Activated CD4-positive, alpha-beta memory T cell treated with anti-CD3 and anti-CD28 coated beads, Interleukin-2, amount 10 ng/mL, durations not matched to agents 7 days and 5 days (primary cell): ENCODE measurements at regions of chr7 and their contacts with region 1.

Region 1: GRCh38 chr7:151123822-151124464 is 37.7 kb downstream of the AGAP3 start:
- DNase-seq: peak; percentile 84
- H3K4me3 Mint-ChIP-seq: no peak overlapping the region
- H3K27ac Mint-ChIP-seq: no peak overlapping the region
- H3K4me1 Mint-ChIP-seq: peaks cover 3% of the 10 kb centered on the region
- H3K27me3 Mint-ChIP-seq: no peaks in the 10 kb centered on the region

Region 2: DNA sequence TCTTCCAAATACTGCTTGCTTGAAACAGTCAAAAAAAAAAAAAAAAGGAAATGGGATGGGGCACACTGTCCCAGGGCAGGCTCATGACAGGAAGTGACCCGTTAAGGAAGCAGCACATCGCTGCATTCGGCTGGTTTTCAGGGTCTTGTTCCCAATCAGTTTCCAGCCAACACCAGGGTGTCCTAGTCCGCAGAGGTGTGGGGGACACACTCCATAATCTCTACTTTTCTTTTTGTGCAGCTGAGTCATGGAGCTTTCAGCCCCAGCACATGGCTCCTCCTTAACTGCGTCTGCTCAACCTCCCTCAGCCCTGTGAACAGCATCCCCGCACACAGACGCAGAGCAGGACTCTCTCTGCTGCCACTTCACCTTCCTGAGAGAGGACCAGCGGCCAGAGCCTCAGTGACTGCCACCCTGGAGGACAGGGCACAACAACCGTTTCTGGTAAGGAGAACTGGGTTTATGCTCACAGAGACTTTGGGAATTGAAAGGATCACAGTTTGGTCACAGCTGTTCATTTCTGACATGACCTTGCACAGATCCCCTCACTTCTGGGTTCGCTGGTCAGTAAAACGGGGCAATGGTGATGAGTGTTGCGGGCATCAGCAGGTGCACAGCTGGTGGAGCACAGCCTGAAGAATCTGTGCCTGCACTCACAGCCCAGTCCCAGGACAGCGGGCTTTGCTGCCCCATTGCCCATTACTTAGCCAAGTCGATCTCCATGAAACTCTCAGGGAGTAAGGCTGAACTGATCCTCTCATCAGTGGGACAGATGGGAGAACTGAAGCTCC is 386.5 kb before region 1 on chr7 and contains the start of gene GIMAP5:
- CTCF ChIA-PET with region 1: no interaction called
- POLR2A ChIA-PET with region 1: no interaction called
- DNase-seq: peak; percentile 65
- H3K4me3 Mint-ChIP-seq: peak within 1 kb of the TSS; percentile 99
- H3K27ac Mint-ChIP-seq: peak within 1 kb of the TSS; percentile 94
- H3K4me1 Mint-ChIP-seq: peaks cover 80% of the 10 kb centered on the region
- H3K27me3 Mint-ChIP-seq: no peaks in the 10 kb centered on the region
- total RNA-seq, gene GIMAP5: 83.9 to 84.3 TPM

Region 3: GRCh38 chr7:151167197-151167961 is 43.4 kb after region 1 on chr7 and contains the start of gene GBX1:
- CTCF ChIA-PET with region 1: interaction called, 12 read pairs
- POLR2A ChIA-PET with region 1: no interaction called
- DNase-seq: no peak
- H3K4me3 Mint-ChIP-seq: peak within 1 kb of the TSS; percentile 53
- H3K27ac Mint-ChIP-seq: no peak within 1 kb of the TSS
- H3K4me1 Mint-ChIP-seq: peaks cover 7% of the 10 kb centered on the region
- H3K27me3 Mint-ChIP-seq: peaks cover 36% of the 10 kb centered on the region
- total RNA-seq, gene GBX1: not detected

Region 4: DNA sequence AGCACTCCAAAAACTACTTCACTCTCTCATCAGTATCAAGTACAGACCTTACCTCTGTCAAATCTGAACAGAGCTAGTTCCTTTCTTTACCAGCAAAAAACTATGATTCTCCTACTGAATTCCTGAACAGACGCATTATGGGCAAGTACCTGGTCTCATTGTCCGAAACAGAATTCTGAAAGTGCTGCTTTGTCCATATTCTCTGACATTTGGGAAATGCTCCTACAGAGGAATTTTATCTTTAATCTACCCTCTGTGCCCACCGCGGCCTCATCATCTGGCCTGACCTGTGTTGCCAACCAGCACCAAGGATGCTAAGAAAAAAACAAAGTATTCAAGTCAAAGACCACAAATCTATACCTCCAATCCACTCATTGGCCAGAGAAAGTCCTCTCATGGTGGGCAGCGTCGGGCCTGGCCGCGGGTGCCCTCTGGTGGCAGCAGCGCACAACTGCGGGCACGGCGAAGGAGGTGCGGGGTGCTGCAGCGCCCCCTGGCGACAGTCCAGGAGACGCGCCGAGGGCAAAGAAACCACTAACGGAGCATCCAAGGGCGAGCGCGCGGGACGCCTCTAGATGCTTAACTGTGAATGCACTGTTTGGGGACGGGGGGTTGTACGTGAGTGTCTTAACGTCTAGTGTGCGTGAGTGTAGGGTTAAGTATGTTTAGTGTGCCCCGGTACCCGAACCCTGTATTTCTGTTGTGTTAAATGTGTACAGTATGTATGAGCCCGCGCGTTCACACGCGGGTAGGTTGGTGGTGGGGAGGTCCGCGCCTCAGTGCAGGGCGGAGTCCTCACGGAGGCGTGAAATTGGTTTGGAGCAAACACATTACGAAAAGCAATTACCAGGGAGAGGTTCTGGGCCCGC is 48.6 kb after region 1 on chr7:
- CTCF ChIA-PET with region 1: interaction called, 10 read pairs
- POLR2A ChIA-PET with region 1: no interaction called
- DNase-seq: peak; percentile 83
- H3K4me3 Mint-ChIP-seq: no peak overlapping the region
- H3K27ac Mint-ChIP-seq: no peak overlapping the region
- H3K4me1 Mint-ChIP-seq: peaks cover 7% of the 10 kb centered on the region
- H3K27me3 Mint-ChIP-seq: peaks cover 52% of the 10 kb centered on the region

Region 5: DNA sequence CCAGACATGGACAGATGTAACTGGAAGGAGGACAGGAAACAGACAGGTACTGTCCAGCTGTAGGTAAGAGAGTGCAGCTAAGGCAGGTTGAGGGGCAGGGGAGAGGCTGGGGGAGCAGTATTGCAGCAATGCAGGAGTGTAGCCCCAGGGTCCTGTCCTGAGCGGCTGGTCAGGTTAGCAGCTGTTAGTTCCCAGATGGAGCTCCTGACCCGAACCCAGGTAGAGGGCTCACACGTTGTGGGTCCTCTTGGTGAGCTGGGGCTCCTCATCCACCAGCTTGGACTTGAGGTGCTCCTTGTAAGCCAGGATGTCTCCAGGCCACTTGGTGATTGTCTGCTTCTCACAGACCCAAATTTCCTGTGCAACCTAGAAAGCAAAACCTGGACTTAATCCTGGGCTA is 89.9 kb after region 1 on chr7:
- CTCF ChIA-PET with region 1: no interaction called
- POLR2A ChIA-PET with region 1: no interaction called
- DNase-seq: no peak
- H3K4me3 Mint-ChIP-seq: no peak overlapping the region
- H3K27ac Mint-ChIP-seq: no peak overlapping the region
- H3K4me1 Mint-ChIP-seq: no peaks in the 10 kb centered on the region
- H3K27me3 Mint-ChIP-seq: no peaks in the 10 kb centered on the region